ENCODE measurements at regions of chr9 and their contacts with region 1.

Region 1: GRCh38 chr9:76658535-76659231 is 105.6 kb upstream of the PCA3 start:
- DNase-seq: no peak
- H3K4me3 Mint-ChIP-seq: no peak overlapping the region
- H3K27ac Mint-ChIP-seq: no peak overlapping the region
- H3K4me1 Mint-ChIP-seq: peaks cover 22% of the 10 kb centered on the region
- H3K27me3 Mint-ChIP-seq: peaks cover 11% of the 10 kb centered on the region

Region 2: GRCh38 chr9:76393963-76394679 is 264.6 kb before region 1 on chr9 and contains the start of gene RFK:
- CTCF ChIA-PET with region 1: interaction called, 13 read pairs
- DNase-seq: peak; percentile 95
- H3K4me3 Mint-ChIP-seq: peak within 1 kb of the TSS; percentile 83
- H3K27ac Mint-ChIP-seq: peak within 1 kb of the TSS; percentile 98
- H3K4me1 Mint-ChIP-seq: peaks cover 35% of the 10 kb centered on the region
- H3K27me3 Mint-ChIP-seq: no peaks in the 10 kb centered on the region

Region 3: DNA sequence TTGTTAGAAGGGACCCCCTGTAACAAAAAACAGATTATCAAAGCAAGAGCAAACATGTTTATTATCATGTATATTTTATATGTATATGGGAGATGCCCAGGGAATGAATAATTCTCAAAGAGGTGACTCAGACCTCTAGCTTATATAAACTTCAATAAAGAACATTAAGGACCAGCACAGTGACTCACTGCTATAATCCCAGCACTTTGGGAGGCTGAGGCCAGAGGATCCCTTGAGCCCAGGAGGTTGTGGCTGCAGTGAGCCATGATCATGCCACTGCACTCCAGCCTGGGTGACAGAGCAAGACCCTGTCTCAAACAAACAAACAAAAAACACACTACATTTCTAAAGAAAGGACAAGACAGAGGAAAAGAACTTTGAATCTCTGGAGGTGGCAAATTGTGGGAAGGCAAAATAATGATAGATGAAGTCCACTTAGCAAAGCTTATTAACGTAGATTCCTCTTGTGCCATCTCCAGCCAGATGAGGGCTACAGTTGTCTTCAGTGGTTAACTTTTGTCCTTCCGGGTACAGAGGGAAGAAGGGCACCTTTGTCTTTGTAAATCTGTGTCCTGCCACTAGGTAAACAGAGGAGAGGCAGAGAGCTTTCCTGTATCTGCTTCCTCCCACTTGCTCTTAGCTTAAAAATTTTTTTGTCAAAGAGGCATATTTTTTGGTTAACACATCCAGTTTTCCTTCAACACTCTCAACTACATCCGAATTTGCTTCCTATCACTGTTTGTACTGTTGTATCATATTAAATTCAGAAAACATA is 256.9 kb before region 1 on chr9:
- CTCF ChIA-PET with region 1: interaction called, 11 read pairs
- DNase-seq: no peak
- H3K4me3 Mint-ChIP-seq: no peak overlapping the region
- H3K27ac Mint-ChIP-seq: peak overlapping the region; percentile 49
- H3K4me1 Mint-ChIP-seq: peaks cover 40% of the 10 kb centered on the region
- H3K27me3 Mint-ChIP-seq: peaks cover 6% of the 10 kb centered on the region

Region 4: DNA sequence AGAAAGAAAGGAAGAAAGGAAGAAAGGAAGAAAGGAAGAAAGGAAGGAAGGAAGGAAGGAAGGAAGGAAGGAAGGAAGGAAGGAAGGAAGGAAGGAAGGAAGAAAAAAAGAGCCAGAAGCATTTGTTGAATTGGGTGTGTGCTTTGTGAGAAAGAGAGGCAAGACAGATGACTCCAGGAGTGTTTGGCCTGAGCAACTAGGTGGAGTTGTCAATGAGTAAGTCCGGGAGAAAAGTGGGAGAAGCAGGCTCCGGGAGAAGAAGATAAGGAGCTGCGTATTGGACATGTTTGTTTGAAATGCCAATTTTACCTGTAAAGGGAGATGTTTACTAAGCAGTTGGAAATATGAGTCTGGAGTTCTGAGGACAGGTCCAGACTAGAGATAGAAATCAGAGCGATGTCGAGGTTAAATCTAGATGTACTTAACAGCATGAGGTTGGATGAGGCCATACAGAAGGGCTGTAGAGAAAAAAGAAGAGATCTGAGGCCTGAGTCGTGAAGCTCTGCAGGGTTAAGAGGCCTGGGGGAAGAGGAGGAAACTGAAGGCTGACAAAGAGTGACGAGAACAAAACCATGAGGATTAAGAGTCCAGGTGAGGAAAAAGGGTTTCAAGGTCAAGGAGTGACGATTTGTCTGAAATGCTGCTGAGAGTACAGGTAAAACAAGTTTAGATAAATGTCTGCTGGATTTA is 214.6 kb before region 1 on chr9:
- CTCF ChIA-PET with region 1: interaction called, 94 read pairs
- DNase-seq: no peak
- H3K4me3 Mint-ChIP-seq: no peak overlapping the region
- H3K27ac Mint-ChIP-seq: no peak overlapping the region
- H3K4me1 Mint-ChIP-seq: peaks cover 10% of the 10 kb centered on the region
- H3K27me3 Mint-ChIP-seq: peaks cover 7% of the 10 kb centered on the region

Region 5: GRCh38 chr9:76458903-76459690 is 199.6 kb before region 1 on chr9 and contains the start of gene GCNT1:
- CTCF ChIA-PET with region 1: interaction called, 61 read pairs
- DNase-seq: peak; percentile 92
- H3K4me3 Mint-ChIP-seq: peak within 1 kb of the TSS; percentile 83
- H3K27ac Mint-ChIP-seq: peak within 1 kb of the TSS; percentile 42
- H3K4me1 Mint-ChIP-seq: peaks cover 35% of the 10 kb centered on the region
- H3K27me3 Mint-ChIP-seq: peaks cover 6% of the 10 kb centered on the region

Region 6: DNA sequence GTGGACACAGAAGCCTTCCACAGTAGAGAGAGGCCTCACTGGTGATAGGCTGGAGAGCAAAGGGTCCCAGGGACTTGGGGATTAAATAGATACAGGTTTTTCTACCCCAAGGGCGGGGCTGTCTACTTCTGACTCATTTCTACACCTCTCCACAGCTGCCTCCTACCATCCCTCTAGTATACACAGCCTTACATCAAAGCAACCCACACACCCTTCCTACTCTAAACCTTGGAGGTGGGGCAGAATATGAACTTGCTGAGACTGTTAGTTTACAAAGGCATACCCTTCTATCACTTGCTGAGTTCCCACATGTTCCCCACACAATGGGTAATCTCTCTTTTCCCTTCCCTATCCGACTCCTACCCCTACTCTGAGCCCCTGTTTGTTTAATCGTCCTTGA is 85.7 kb after region 1 on chr9:
- CTCF ChIA-PET with region 1: no interaction called
- DNase-seq: no peak
- H3K4me3 Mint-ChIP-seq: no peak overlapping the region
- H3K27ac Mint-ChIP-seq: no peak overlapping the region
- H3K4me1 Mint-ChIP-seq: peaks cover 10% of the 10 kb centered on the region
- H3K27me3 Mint-ChIP-seq: peaks cover 8% of the 10 kb centered on the region

Measured in activated naive CD4-positive, alpha-beta T cell treated with anti-CD3 and anti-CD28 coated beads, Interleukin-2, amount 10 ng/mL, durations not matched to agents 7 days and 5 days (primary cell).